Body of pancreas (tissue), 4 donors: ENCODE measurements at regions of chr2 and their contacts with region 1.

Region 1: GRCh38 chr2:28747714-28748113 is 3.9 kb upstream of the PPP1CB start:
- DNase-seq: no peak
- ATAC-seq: no peak
- H3K4me3 ChIP-seq: no peak overlapping the region
- H3K27ac ChIP-seq: peak overlapping the region in 2 of 4 donors; percentile 25 to 32
- H3K4me1 ChIP-seq: peaks cover 15% of the 10 kb centered on the region
- H3K27me3 ChIP-seq: no peaks in the 10 kb centered on the region
- CTCF ChIP-seq: no peak
- POLR2A ChIP-seq: no peak

Region 2: DNA sequence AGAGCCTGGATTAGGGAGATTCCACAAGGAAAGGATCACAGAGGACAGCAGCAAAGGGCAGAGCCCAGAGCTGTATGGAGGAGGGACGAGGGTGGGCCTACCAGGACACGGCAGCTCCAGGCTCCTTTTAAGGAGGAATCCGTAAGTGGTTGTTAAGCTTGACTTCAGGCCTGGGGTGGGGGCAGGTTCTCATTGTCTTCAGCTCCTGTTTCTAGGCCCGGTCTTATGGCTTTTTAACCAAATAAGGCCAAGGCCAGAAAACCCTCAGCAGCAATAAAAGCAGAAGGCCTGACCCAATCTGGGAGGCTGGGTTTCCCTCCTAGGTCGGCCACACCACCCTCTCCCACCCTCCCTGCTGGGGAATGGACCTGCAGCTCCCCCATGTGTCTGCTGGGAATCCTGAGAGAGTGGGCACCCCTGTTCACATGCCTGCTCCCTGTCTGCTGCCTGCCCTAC is 140.7 kb before region 1 on chr2:
- intact Hi-C with region 1: loop called (anchors 10 kb)
- DNase-seq: no peak
- ATAC-seq: no peak
- H3K4me3 ChIP-seq: no peak overlapping the region
- H3K27ac ChIP-seq: no peak overlapping the region
- H3K4me1 ChIP-seq: no peaks in the 10 kb centered on the region
- H3K27me3 ChIP-seq: no peaks in the 10 kb centered on the region
- CTCF ChIP-seq: no peak
- POLR2A ChIP-seq: no peak